Psoas muscle (tissue), 8 donors: ENCODE measurements at regions of chr4 and their contacts with region 1.

Region 1: DNA sequence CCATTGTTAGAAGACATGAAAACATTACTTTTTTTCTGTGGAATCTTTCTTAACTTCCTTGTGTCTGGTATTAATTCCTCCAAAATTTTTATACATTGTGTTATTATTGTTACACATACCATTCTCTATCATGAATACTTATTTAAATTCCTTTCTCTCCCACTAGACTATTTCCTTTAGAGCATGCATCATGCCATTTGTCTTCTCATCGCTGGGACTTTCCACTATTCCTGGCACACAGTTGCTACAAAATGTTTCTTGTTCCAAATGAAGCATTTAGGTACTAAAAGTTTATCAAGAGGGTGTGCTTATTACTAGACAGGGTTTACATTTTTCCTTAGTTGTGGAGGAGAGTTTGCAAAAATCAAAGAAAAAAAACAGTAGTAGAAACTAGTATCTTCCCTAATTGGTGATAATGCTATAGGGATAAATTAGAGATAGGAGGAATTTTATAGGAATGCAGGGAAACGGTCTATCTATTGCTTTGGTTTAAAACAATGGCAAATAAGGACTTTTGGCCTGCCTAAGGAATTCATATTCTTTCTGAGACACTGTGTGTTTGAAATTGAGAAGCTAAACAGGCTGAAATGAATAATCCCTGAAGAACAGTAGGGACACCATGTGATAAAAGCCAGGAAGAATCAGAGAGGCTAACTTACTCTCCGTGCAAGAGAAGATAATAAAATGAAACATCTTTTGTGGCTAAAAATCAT is 187.5 kb upstream of the TBC1D9 start:
- DNase-seq: no peak
- ATAC-seq: no peak
- H3K4me3 ChIP-seq: no peak overlapping the region
- H3K27ac ChIP-seq: no peak overlapping the region
- H3K4me1 ChIP-seq: peaks cover 12% of the 10 kb centered on the region
- H3K27me3 ChIP-seq: no peaks in the 10 kb centered on the region
- CTCF ChIP-seq: no peak

Region 2: DNA sequence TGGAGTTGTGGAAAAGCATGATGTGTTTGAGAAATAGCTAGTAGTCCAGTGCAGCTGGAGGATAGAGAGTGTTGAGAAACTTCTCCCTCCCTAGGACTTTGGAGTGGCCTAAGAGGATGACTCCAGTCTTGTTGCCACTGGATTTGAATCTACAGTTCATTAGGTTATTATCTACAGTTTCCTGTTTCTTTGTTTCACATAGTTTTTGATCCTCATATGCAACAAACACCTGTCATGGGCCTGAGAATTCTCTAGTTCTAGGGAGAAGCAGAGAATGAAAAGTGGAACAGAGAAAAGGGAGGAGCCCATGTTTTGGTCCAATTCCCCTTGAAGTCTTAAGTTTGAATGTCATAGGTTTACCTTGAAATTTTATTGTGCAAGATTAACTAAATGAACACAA is 113.8 kb before region 1 on chr4:
- intact Hi-C with region 1: no loop called
- DNase-seq: no peak
- ATAC-seq: no peak
- H3K4me3 ChIP-seq: no peak overlapping the region
- H3K27ac ChIP-seq: no peak overlapping the region
- H3K4me1 ChIP-seq: no peaks in the 10 kb centered on the region
- H3K27me3 ChIP-seq: no peaks in the 10 kb centered on the region
- CTCF ChIP-seq: no peak

Region 3: GRCh38 chr4:140976768-140977167 is 33.1 kb after region 1 on chr4:
- intact Hi-C with region 1: loop called in 1 of 2 experiments (anchors 5 kb)
- DNase-seq: no peak
- ATAC-seq: no peak
- H3K4me3 ChIP-seq: no peak overlapping the region
- H3K27ac ChIP-seq: no peak overlapping the region
- H3K4me1 ChIP-seq: peaks cover 3% of the 10 kb centered on the region
- H3K27me3 ChIP-seq: no peaks in the 10 kb centered on the region
- CTCF ChIP-seq: no peak